OCI-LY7 (cell line): ENCODE measurements at regions of chr20 and their contacts with region 1.

Region 1: GRCh38 chr20:5569021-5569420 is 181.2 kb upstream of the SHLD1 start:
- DNase-seq: peak; percentile 83
- H3K4me3 ChIP-seq: no peak overlapping the region
- H3K27ac ChIP-seq: peak overlapping the region; percentile 52
- H3K4me1 ChIP-seq: peaks cover 39% of the 10 kb centered on the region
- CTCF ChIP-seq: peak; percentile 94

Region 2: GRCh38 chr20:5586720-5587119 is 17.7 kb after region 1 on chr20:
- CTCF ChIA-PET with region 1: interaction called, 3 read pairs
- POLR2A ChIA-PET with region 1: interaction called, 16 read pairs
- intact Hi-C with region 1: no loop called
- DNase-seq: peak; percentile 48
- H3K4me3 ChIP-seq: peak overlapping the region; percentile 18
- H3K27ac ChIP-seq: peak overlapping the region; percentile 97
- H3K4me1 ChIP-seq: peaks cover 83% of the 10 kb centered on the region
- CTCF ChIP-seq: no peak

Region 3: DNA sequence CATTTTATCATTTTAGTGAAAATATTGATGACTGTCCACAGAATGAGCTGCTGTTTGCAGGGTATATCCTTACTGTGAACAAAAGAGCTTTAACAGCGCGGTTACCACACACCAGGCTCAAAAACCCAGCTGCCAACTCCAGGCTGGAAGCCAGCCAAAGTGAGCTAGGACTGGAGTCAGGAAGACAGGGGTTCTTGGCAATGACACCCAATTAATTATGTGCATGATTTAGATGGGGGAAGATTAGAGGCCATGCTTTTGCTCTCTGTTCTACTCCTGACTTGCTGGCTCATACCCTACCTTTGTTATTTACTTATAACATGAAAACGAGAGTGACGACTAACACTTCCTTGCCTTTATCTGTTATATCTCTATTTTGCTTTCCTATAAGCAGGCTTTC is 52.3 kb after region 1 on chr20:
- CTCF ChIA-PET with region 1: no interaction called
- POLR2A ChIA-PET with region 1: no interaction called
- intact Hi-C with region 1: no loop called
- DNase-seq: no peak
- H3K4me3 ChIP-seq: no peak overlapping the region
- H3K27ac ChIP-seq: no peak overlapping the region
- H3K4me1 ChIP-seq: no peaks in the 10 kb centered on the region
- CTCF ChIP-seq: no peak

Region 4: DNA sequence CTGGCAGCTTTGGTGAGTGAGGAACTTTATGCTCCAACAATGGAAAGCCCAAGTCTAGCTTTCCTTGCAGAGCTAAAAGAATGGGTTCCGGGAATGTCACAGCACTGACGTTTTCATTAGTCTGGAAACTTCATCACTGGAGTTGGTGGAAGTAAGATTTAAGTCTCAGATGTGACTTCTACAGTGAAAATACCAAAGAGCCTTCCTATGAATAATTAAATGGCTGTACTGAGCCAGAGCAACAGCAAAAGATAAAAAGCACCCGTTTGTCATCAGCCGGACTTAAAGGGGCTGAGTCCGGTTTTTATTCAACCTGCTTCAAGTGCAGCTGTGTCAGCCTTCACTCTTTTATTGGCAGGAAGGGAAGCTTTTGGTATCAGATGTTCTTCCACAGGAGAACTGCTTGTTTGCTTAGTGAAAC is 134.7 kb after region 1 on chr20:
- CTCF ChIA-PET with region 1: no interaction called
- POLR2A ChIA-PET with region 1: no interaction called
- intact Hi-C with region 1: no loop called
- DNase-seq: peak; percentile 43
- H3K4me3 ChIP-seq: no peak overlapping the region
- H3K27ac ChIP-seq: no peak overlapping the region
- H3K4me1 ChIP-seq: peaks cover 28% of the 10 kb centered on the region
- CTCF ChIP-seq: no peak

Region 5: DNA sequence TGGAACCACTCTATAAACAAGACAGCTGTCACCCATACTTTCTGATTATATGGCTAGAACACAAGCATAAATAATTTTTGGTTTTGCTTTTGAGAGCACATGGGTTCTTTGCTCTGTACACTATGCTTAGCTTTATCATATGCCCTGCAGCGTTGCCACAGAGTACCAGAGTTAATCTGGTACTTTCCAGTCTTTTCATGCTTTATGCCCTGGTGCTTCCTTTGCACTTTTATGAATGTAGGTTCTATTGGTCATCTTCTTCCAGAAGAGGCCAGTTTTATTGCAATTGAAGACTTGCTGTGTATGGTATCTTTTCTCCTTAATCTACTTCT is 201.9 kb after region 1 on chr20:
- CTCF ChIA-PET with region 1: no interaction called
- POLR2A ChIA-PET with region 1: interaction called, 4 read pairs
- intact Hi-C with region 1: loop called (anchors 5 kb)
- DNase-seq: peak; percentile 50
- H3K4me3 ChIP-seq: peak overlapping the region; percentile 33
- H3K27ac ChIP-seq: peak overlapping the region; percentile 80
- H3K4me1 ChIP-seq: peaks cover 63% of the 10 kb centered on the region
- CTCF ChIP-seq: no peak